ENCODE measurements at regions of chr6 and their contacts with region 1.

Region 1: GRCh38 chr6:136226027-136226673 is 24.0 kb downstream of the MTFR2 start:
- DNase-seq: peak in 2 of 3 donors; percentile 29 to 72
- ATAC-seq: peak; percentile 86 to 87
- H3K4me3 ChIP-seq: peak overlapping the region; percentile 44
- H3K27ac ChIP-seq: no peak overlapping the region
- H3K4me1 ChIP-seq: no peaks in the 10 kb centered on the region
- H3K27me3 ChIP-seq: no peaks in the 10 kb centered on the region

Region 2: GRCh38 chr6:135423649-135424128 is 802.5 kb before region 1 on chr6:
- intact Hi-C with region 1: loop called in 1 of 4 experiments (anchors 10 kb)
- DNase-seq: no peak
- ATAC-seq: peak; percentile 38 to 49
- H3K4me3 ChIP-seq: no peak overlapping the region
- H3K27ac ChIP-seq: no peak overlapping the region
- H3K4me1 ChIP-seq: no peaks in the 10 kb centered on the region
- H3K27me3 ChIP-seq: no peaks in the 10 kb centered on the region

Region 3: DNA sequence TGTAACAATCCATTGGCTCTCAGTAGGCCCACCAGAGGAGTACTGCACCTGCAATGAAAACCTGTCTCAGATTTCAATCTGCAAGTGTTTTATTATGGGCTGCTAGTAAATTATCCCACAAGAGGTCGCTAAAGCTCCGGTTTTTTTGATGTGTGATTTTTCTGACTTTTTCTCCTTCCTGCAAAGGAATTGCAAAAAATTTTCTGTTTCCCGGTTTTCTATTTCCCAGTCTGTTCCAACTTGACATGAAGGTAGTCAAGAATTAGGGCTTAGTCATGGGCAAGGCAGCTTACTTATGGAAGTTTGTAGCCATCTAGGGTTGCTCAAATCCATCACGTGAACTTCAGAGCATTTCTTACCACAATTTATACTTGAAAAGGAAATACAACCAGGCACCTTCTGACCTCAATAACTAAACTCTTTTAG is 690.1 kb before region 1 on chr6:
- intact Hi-C with region 1: loop called (anchors 2 to 5 kb)
- DNase-seq: no peak
- ATAC-seq: peak in 1 of 2 donors; percentile 35
- H3K4me3 ChIP-seq: no peak overlapping the region
- H3K27ac ChIP-seq: no peak overlapping the region
- H3K4me1 ChIP-seq: no peaks in the 10 kb centered on the region
- H3K27me3 ChIP-seq: no peaks in the 10 kb centered on the region

Region 4: GRCh38 chr6:135938576-135939207 is 287.5 kb before region 1 on chr6:
- intact Hi-C with region 1: loop called in 1 of 4 experiments (anchors 10 kb)
- DNase-seq: peak; percentile 40 to 82 (median 52)
- ATAC-seq: peak; percentile 86 to 89
- H3K4me3 ChIP-seq: no peak overlapping the region
- H3K27ac ChIP-seq: no peak overlapping the region
- H3K4me1 ChIP-seq: peaks cover 2% of the 10 kb centered on the region
- H3K27me3 ChIP-seq: no peaks in the 10 kb centered on the region

Region 5: GRCh38 chr6:136031982-136032381 is 194.2 kb before region 1 on chr6:
- intact Hi-C with region 1: loop called in 2 of 4 experiments (anchors 5 kb)
- DNase-seq: no peak
- ATAC-seq: peak in 1 of 2 donors; percentile 31
- H3K4me3 ChIP-seq: no peak overlapping the region
- H3K27ac ChIP-seq: no peak overlapping the region
- H3K4me1 ChIP-seq: peaks cover 8% of the 10 kb centered on the region
- H3K27me3 ChIP-seq: no peaks in the 10 kb centered on the region

Region 6: DNA sequence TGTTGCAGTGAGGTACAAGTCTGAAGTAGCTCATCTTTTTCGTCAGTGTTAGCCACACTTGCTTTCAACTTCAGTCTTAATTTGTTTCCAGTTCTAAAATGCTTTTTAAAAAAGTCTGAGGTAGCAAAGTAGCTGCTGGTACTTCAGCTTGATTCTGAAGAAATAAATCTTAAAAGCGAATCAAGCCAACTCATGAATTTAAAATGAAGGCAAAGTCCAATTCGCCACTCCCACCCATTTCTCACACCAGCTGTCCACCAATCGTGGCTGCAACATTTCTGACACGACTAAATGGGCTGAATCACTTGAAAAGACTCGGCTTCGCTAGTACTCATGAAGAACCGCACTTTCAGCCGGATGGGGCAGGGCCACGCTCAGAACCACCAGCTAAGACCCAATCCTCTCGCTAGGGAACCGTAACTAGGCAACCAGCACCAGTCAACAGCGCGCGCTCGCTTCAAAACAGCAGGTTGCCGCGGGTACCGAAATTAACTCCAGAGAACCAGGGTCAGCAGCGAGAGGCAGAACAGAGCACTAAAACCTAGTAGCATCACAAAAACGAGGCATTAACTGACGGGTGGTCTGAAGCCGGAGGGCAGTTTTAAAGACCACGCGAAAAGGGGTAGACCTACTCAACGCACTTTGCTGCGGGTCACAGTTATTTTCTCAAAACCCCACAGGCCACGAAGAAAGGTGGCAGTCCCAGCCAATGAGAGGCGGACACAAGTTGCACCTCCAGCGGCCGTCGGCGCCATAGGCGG is 62.6 kb after region 1 on chr6:
- intact Hi-C with region 1: no loop called
- DNase-seq: peak; percentile 84 to 89 (median 85)
- ATAC-seq: peak; percentile 56 to 78
- H3K4me3 ChIP-seq: peak overlapping the region; percentile 69
- H3K27ac ChIP-seq: peak overlapping the region; percentile 98
- H3K4me1 ChIP-seq: peaks cover 4% of the 10 kb centered on the region
- H3K27me3 ChIP-seq: no peaks in the 10 kb centered on the region